Panc1 (cell line): ENCODE measurements at regions of chr6 and their contacts with region 1.

Region 1: GRCh38 chr6:147122824-147123223 is 81.4 kb upstream of the STXBP5 start:
- DNase-seq: no peak
- ATAC-seq: no peak
- H3K4me3 ChIP-seq: no peak overlapping the region
- H3K27ac ChIP-seq: peak overlapping the region; percentile 29; the same call in 1 of the 2 replicates
- H3K4me1 ChIP-seq: peaks cover 3% of the 10 kb centered on the region; the same call in 1 of the 2 replicates
- H3K27me3 ChIP-seq: no peaks in the 10 kb centered on the region
- CTCF ChIP-seq: no peak

Region 2: GRCh38 chr6:146857180-146857979 is 265.4 kb before region 1 on chr6:
- CTCF ChIA-PET with region 1: no interaction called
- POLR2A ChIA-PET with region 1: no interaction called
- in situ Hi-C with region 1: no loop called
- intact Hi-C with region 1: loop called (anchors 5 kb)
- DNase-seq: peak; percentile 43
- ATAC-seq: peak; percentile 99
- H3K4me3 ChIP-seq: peak overlapping the region; percentile 43 to 67
- H3K27ac ChIP-seq: peak overlapping the region; percentile 94
- H3K4me1 ChIP-seq: peaks cover 12% of the 10 kb centered on the region; the same call in 1 of the 2 replicates
- H3K27me3 ChIP-seq: no peaks in the 10 kb centered on the region
- CTCF ChIP-seq: peak; percentile 99